Sciatic nerve (tissue), 2 donors: ENCODE measurements at regions of chr11 and their contacts with region 1.

Region 1: GRCh38 chr11:117949062-117949461 is 19.9 kb upstream of the TMPRSS13 start:
- DNase-seq: no peak
- ATAC-seq: no peak

Region 2: DNA sequence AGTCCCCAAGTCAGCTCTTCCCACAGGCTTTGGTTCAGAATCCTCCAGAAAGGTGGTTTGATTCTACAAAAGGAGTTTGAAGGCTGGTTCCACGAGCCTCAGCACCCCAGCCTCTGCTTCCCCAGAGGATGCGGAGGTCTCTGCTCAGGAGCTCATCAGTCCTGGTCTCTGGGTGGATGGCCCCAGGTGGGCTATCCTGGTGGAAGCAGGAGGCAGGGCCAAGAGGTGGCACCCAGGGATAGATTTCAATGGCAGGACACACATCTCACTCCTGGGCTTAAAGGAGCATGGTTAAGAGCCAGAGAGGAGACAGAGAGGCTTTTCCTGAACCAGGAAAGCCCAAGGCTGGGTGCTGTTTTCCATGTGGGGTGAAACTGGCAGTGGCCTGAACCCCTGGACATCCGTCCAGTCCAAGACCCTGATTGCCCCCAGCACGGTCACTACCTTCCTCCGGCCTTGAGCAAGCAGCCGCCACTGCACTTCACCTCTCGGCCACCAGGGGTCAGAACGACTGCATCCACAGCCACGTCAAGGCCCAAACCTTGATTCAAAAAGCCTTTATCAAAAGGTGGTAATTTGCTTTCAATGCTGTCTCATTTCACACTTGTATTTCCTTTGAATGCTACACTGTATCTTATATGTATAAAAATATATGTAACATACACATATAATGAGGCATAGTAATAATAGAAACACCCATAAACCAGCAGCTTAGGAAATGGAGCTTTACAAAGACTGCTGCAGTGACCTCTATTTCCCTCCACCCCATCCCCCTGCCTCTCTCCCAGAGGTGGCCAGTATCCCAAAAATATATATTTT is 105.2 kb before region 1 on chr11:
- intact Hi-C with region 1: loop called (anchors 2 kb)
- DNase-seq: peak; percentile 92
- ATAC-seq: peak; percentile 80